ENCODE measurements at regions of chr1 and their contacts with region 1.

Region 1: GRCh38 chr1:1441002-1441888 is 5.8 kb downstream of the VWA1 start:
- DNase-seq: peak in 1 of 2 experiments; percentile 87
- H3K4me3 ChIP-seq: no peak overlapping the region
- H3K27ac ChIP-seq: no peak overlapping the region
- H3K4me1 ChIP-seq: peaks cover 0 to 4% (median 3%) of the 10 kb centered on the region in 4 experiments; a peak in 5 of 7 replicates
- H3K27me3 ChIP-seq: peaks cover 0 to 3% (median 0%) of the 10 kb centered on the region in 4 experiments; a peak in 2 of 7 replicates
- CTCF ChIP-seq: peak in 2 of 3 experiments; percentile 73 to 76; a peak in 3 of 4 replicates
- EP300 ChIP-seq: no peak
- POLR2A ChIP-seq: no peak
- RAD21 ChIP-seq: peak; percentile 61 to 72

Region 2: GRCh38 chr1:1406817-1407635 is 34.2 kb before region 1 on chr1 and contains the start of gene MRPL20:
- CTCF ChIA-PET with region 1: interaction called, 20 read pairs
- POLR2A ChIA-PET with region 1: interaction called, 515 read pairs
- DNase-seq: peak; percentile 61 to 93
- H3K4me3 ChIP-seq: peak within 1 kb of the TSS; percentile 91 to 99 (median 93)
- H3K27ac ChIP-seq: peak within 1 kb of the TSS; percentile 94
- H3K4me1 ChIP-seq: peaks cover 8 to 18% (median 14%) of the 10 kb centered on the region in 4 experiments
- H3K27me3 ChIP-seq: no peaks in the 10 kb centered on the region
- CTCF ChIP-seq: 0 out of 4 replicates have a peak, but pooled peaks of 1 of the 3 experiments have one; percentile 0
- EP300 ChIP-seq: no peak
- POLR2A ChIP-seq: peak in 1 of 2 experiments; percentile 94; a peak in 2 of 3 replicates
- RAD21 ChIP-seq: no peak
- total RNA-seq, gene MRPL20: 126 and 130 TPM in 2 replicates

Region 3: DNA sequence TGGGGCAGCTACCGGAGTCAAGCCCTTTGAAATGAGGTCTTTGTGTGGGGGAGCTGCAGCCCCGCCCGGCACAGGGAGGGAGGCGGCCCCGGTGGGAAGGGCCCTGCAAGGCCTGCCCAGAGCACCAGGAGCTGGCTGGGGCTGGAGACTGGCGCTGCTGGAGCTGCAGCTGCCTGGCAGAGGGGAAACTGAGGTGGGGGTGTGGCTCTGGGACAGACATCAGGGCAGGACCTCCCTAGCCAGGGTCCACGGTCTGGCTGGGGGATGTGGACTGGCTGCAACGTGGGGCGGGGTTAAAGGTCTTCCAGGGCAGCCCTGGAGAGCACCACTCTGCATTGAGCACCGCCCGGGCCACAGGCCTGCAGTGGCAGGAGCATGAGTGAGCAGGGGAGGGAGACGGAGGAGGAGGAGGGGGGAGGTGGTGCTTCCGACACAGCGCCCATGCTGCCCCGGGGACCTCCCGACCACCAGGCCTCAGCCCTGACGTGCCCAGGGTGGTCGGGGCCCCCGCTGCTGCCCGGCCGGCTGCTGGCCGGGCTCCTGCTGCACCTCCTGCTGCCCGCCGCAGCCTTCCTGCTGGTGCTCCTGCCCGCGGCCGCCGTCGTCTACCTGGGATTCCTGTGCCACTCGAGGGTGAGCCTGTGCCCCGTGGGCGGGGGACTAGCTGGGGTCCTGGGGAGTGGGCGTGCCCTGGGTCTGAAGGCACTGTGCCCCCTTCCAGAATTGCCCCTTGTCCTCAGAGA is 15.3 kb before region 1 on chr1:
- CTCF ChIA-PET with region 1: interaction called, 36 read pairs
- POLR2A ChIA-PET with region 1: interaction called, 11 read pairs
- DNase-seq: peak in 1 of 2 experiments; percentile 73
- H3K4me3 ChIP-seq: peak overlapping the region in 3 of 4 experiments; percentile 11 to 38 (median 14); a peak in 4 of 8 replicates
- H3K27ac ChIP-seq: no peak overlapping the region
- H3K4me1 ChIP-seq: peaks cover 0 to 39% (median 27%) of the 10 kb centered on the region in 4 experiments; a peak in 6 of 7 replicates
- H3K27me3 ChIP-seq: no peaks in the 10 kb centered on the region; a peak in 1 of 7 replicates
- CTCF ChIP-seq: no peak
- EP300 ChIP-seq: no peak
- POLR2A ChIP-seq: no peak
- RAD21 ChIP-seq: no peak

Region 4: GRCh38 chr1:1451696-1452367 is 10.6 kb after region 1 on chr1:
- CTCF ChIA-PET with region 1: interaction called, 12 read pairs
- POLR2A ChIA-PET with region 1: interaction called, 5 read pairs
- DNase-seq: no peak
- H3K4me3 ChIP-seq: no peak overlapping the region
- H3K27ac ChIP-seq: no peak overlapping the region
- H3K4me1 ChIP-seq: no peaks in the 10 kb centered on the region
- H3K27me3 ChIP-seq: no peaks in the 10 kb centered on the region
- CTCF ChIP-seq: no peak
- EP300 ChIP-seq: no peak
- POLR2A ChIP-seq: no peak
- RAD21 ChIP-seq: no peak

Measured in H1 (cell line).